ENCODE measurements at regions of chr19 and their contacts with region 1.

Region 1: GRCh38 chr19:506404-507285 is 652 bp upstream of the TPGS1 start:
- DNase-seq: peak; percentile 99

Region 2: DNA sequence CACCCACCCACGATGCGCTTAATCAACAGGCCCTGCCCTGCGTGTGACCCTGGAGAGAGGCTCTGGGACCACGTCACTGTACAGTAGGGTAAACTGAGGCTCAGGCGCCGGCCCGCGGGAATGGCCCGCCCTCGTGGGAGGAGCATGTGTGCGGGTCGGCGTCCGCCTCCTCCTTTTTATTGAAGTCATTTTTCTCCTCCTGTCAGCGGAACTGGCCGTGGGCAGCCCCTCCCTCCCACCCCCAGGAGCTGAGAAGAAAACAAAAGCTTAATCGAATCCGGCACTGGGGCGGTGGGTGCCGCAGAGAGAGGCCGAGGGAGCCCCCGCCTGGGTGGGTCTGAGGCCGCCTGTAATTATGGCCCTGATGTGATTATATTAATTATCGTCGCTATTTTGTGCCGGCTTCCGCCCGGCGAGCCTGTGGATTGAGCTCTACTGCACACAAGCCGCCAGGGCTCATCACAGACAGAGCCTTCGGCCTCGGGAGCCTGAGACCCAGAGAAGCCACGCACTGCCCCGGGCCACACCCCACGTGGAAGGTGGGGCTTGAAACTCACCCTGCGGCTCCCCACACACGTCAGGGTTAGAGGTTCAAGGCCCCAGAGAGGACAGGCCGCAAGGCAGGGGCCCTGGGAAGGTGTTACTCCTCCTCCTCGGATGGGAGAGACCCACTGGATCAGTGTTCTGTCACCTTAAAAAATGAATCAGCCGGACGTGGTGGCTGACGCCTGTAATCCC is 104.6 kb before region 1 on chr19:
- intact Hi-C with region 1: no loop called
- DNase-seq: peak; percentile 69

Region 3: GRCh38 chr19:488505-489417 is 17.9 kb before region 1 on chr19:
- intact Hi-C with region 1: loop called (anchors 1 kb)
- DNase-seq: peak; percentile 98

Region 4: GRCh38 chr19:796692-797527 is 290.3 kb after region 1 on chr19 and contains the start of gene PTBP1:
- intact Hi-C with region 1: loop called (anchors 2 kb)
- DNase-seq: peak; percentile 100
- total RNA-seq, gene PTBP1: 76.9 TPM